ENCODE measurements at regions of chr7 and their contacts with region 1.

Region 1: GRCh38 chr7:112254156-112254555 is 47.7 kb downstream of the ZNF277 start:
- DNase-seq: no peak
- H3K4me3 ChIP-seq: no peak overlapping the region
- H3K27ac ChIP-seq: no peak overlapping the region
- H3K4me1 ChIP-seq: no peaks in the 10 kb centered on the region
- H3K27me3 ChIP-seq: no peaks in the 10 kb centered on the region
- CTCF ChIP-seq: no peak
- EP300 ChIP-seq: no peak
- POLR2A ChIP-seq: no peak

Region 2: DNA sequence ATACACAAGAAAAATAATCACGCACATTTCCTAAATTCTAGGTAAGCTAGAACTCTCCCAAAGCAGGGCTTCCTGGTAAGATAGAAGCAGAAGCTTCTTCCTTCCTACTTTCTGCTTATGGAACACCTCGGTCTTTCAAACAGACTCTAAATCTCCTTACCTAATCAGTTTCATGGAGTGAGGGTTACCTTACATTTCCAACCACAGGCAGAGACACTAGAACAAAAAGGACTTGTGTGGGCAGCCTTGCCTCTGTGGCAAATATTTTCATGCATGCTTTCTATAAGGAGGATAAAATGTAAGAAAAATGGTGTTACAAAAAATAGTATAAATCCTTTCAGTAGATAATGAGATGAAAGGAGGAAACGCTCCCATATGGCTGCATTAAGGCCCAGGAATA is 1250.5 kb after region 1 on chr7:
- intact Hi-C with region 1: loop called in 1 of 4 experiments (anchors 5 kb)
- DNase-seq: no peak
- H3K4me3 ChIP-seq: no peak overlapping the region
- H3K27ac ChIP-seq: no peak overlapping the region
- H3K4me1 ChIP-seq: no peaks in the 10 kb centered on the region
- H3K27me3 ChIP-seq: no peaks in the 10 kb centered on the region
- CTCF ChIP-seq: no peak
- EP300 ChIP-seq: no peak
- POLR2A ChIP-seq: no peak

Measured in ovary (tissue), 10 donors.